ENCODE measurements at regions of chr16 and their contacts with region 1.

Region 1: GRCh38 chr16:87778830-87779579 is 13.2 kb upstream of the KLHDC4 start:
- DNase-seq: peak; percentile 85
- ATAC-seq: peak; percentile 75
- H3K4me3 ChIP-seq: no peak overlapping the region
- H3K27ac ChIP-seq: peak overlapping the region; percentile 44
- H3K4me1 ChIP-seq: peaks cover 10% of the 10 kb centered on the region
- H3K27me3 ChIP-seq: no peaks in the 10 kb centered on the region
- CTCF ChIP-seq: peak; percentile 69

Region 2: DNA sequence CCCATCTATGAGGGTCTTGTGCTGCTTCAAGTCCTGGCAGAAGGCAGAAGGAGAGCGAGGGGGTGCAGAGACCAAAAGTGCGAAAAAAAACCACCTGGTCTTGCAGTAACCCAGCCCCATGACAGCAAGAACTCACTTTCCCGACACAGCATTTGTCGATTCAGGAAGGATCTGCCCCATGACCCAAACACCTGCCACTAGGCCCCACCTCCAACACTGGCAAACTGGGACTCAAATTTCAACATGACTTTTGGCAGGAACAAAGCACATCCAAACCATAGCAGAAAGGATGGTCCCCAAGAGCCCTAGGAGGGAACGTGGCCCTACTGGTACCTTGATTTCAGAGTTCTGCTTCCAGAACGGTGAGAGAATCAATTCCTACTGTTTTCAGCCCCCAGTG is 21.5 kb after region 1 on chr16:
- CTCF ChIA-PET with region 1: no interaction called
- POLR2A ChIA-PET with region 1: no interaction called
- intact Hi-C with region 1: no loop called
- DNase-seq: no peak
- ATAC-seq: no peak
- H3K4me3 ChIP-seq: no peak overlapping the region
- H3K27ac ChIP-seq: no peak overlapping the region
- H3K4me1 ChIP-seq: no peaks in the 10 kb centered on the region
- H3K27me3 ChIP-seq: no peaks in the 10 kb centered on the region
- CTCF ChIP-seq: no peak

Region 3: DNA sequence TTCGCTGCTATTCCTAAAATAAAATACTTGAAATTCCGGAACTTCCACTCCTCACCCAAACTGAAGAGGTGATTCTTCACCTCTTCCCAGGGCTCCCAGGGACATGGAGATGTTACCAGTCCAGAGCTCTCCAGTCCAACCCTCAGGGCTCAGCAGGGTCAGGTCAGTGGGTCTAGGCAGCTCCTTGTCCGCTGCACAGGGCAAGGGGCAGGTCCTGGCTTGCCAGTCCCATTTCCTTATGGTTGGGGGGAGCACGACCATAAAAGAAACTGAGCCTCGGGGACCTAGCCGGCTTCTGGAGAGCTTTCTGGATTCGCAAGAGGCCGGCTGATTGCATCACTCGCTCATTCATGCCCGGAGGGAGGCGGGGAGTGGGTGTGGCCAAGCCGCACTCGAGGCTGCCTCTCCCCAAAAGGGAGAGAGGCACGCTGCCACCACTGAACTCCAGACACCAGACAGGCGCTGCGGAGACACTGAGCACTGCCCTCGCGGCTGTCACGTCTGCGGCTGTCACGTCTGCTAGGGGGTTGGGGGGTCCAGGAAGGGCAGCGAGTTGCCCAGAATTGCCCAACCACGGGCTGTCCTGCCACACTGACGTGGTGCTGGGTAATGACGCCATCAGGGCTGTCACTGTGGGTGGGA is 74.5 kb after region 1 on chr16:
- CTCF ChIA-PET with region 1: interaction called, 5 read pairs
- POLR2A ChIA-PET with region 1: no interaction called
- intact Hi-C with region 1: loop called (anchors 5 kb)
- DNase-seq: peak; percentile 81
- ATAC-seq: peak; percentile 30
- H3K4me3 ChIP-seq: peak overlapping the region; percentile 50; the same call in 1 of the 2 replicates
- H3K27ac ChIP-seq: peak overlapping the region; percentile 95
- H3K4me1 ChIP-seq: peaks cover 42% of the 10 kb centered on the region
- H3K27me3 ChIP-seq: no peaks in the 10 kb centered on the region
- CTCF ChIP-seq: no peak

Region 4: DNA sequence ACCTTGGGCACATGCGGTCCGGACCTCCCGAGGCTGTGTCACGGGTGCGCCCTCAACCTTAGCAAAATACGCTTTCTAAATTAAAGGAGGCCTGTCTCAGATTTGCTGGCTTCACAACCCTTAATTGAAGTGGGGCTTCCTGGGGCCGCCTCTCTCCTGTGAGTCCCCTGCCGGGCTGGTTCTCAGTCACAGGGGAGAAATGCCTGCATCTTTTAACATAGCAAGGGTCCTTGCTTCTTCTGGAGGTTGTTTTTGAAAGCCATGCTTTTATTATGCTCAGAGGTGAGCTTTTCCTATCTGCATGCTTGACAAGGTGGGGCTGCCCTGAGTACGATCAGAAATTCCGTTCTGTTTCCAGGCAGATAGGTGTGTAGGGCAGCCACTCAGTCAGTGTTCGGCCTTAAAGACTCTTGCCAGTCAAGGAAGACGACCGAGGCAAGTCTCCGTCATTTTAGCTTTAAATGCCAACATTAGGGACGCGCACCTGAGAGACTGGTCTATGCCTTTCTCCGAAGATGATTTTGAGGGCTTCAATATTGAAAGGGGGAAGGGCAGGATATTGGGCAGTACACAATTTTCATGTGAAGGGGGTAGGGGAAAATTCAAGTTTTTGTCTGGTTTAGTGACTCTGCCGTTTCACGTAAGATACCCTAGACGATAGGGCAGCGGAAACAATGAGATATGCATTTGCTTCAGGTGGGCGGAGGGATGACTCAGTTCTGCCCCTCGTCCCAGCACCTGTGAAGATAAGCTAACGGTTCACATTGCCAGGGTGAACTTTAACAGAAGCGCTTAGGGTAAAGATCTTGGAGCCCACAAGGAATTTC is 95.8 kb after region 1 on chr16:
- CTCF ChIA-PET with region 1: interaction called, 42 read pairs
- POLR2A ChIA-PET with region 1: no interaction called
- intact Hi-C with region 1: loop called (anchors 1 kb)
- DNase-seq: no peak
- ATAC-seq: no peak
- H3K4me3 ChIP-seq: no peak overlapping the region
- H3K27ac ChIP-seq: no peak overlapping the region
- H3K4me1 ChIP-seq: peaks cover 7% of the 10 kb centered on the region; the same call in 1 of the 2 replicates
- H3K27me3 ChIP-seq: no peaks in the 10 kb centered on the region
- CTCF ChIP-seq: no peak